OCI-LY7 (cell line): ENCODE measurements at regions of chr2 and their contacts with region 1.

Region 1: GRCh38 chr2:43131024-43131889 is 95.1 kb downstream of the ZFP36L2 start:
- DNase-seq: peak; percentile 93
- H3K4me3 ChIP-seq: peak overlapping the region; percentile 3
- H3K27ac ChIP-seq: peak overlapping the region; percentile 93
- H3K4me1 ChIP-seq: peaks cover 97% of the 10 kb centered on the region
- CTCF ChIP-seq: peak; percentile 70

Region 2: DNA sequence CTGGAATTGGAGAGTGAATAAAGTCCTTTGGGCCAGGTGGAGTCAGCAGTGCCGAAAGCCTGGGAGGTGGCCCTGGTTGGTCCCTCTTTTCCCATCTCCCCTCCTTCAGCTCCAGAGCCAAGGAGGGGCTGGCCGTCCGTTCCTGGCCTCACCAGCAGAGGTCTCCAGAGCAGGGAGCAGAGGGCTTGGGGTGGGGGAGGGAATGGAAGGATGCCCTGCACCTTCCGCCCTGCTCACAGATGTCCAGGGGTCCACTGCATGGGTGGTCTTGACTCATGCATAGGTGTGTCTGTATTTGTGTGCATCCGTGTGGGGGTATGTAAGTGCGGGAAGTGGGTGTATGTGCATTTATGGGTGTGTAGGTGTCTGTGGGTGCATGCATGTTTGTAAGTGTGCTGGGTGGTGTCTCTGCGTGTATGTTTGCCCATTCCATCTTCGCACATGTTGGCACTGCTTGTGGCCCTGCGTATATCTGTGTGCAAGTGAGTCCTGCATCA is 106.7 kb before region 1 on chr2:
- CTCF ChIA-PET with region 1: interaction called, 3 read pairs
- POLR2A ChIA-PET with region 1: no interaction called
- intact Hi-C with region 1: loop called (anchors 2 kb)
- DNase-seq: peak; percentile 55
- H3K4me3 ChIP-seq: no peak overlapping the region
- H3K27ac ChIP-seq: no peak overlapping the region
- H3K4me1 ChIP-seq: no peaks in the 10 kb centered on the region
- CTCF ChIP-seq: peak; percentile 88

Region 3: DNA sequence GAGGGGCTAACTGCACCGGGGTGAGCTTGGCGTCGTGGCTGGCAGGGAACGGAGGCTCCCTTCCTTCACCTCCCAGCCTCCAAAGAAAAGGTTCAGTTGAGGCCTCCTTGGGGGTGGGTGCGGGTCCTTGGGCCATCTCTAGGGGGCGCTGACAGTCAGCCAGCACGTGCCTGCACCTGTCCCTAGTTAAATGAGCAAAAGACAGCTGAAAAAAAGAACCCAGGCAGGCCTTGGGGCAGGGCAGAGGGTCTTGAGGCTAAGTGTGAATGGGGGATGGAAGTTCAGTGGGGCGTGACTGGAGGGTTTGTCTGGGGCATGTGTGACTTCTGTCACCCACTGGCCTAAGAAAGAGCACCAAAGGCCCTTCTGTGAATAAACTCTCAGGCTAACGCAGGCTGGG is 38.7 kb after region 1 on chr2:
- CTCF ChIA-PET with region 1: interaction called, 4 read pairs
- POLR2A ChIA-PET with region 1: interaction called, 8 read pairs
- intact Hi-C with region 1: loop called (anchors 1 kb)
- DNase-seq: peak; percentile 80
- H3K4me3 ChIP-seq: no peak overlapping the region
- H3K27ac ChIP-seq: no peak overlapping the region
- H3K4me1 ChIP-seq: peaks cover 51% of the 10 kb centered on the region
- CTCF ChIP-seq: peak; percentile 94

Region 4: GRCh38 chr2:43194121-43194869 is 63.0 kb after region 1 on chr2:
- CTCF ChIA-PET with region 1: interaction called, 3 read pairs
- POLR2A ChIA-PET with region 1: interaction called, 3 read pairs
- intact Hi-C with region 1: loop called (anchors 2 kb)
- DNase-seq: no peak
- H3K4me3 ChIP-seq: peak overlapping the region; percentile 33
- H3K27ac ChIP-seq: peak overlapping the region; percentile 71
- H3K4me1 ChIP-seq: peaks cover 48% of the 10 kb centered on the region
- CTCF ChIP-seq: no peak

Region 5: GRCh38 chr2:43219383-43220228 is 88.3 kb after region 1 on chr2:
- CTCF ChIA-PET with region 1: interaction called, 9 read pairs
- POLR2A ChIA-PET with region 1: interaction called, 16 read pairs
- intact Hi-C with region 1: no loop called
- DNase-seq: peak; percentile 94
- H3K4me3 ChIP-seq: peak overlapping the region; percentile 89
- H3K27ac ChIP-seq: peak overlapping the region; percentile 91
- H3K4me1 ChIP-seq: peaks cover 67% of the 10 kb centered on the region
- CTCF ChIP-seq: no peak; the same call in 1 of the 2 replicates

Region 6: DNA sequence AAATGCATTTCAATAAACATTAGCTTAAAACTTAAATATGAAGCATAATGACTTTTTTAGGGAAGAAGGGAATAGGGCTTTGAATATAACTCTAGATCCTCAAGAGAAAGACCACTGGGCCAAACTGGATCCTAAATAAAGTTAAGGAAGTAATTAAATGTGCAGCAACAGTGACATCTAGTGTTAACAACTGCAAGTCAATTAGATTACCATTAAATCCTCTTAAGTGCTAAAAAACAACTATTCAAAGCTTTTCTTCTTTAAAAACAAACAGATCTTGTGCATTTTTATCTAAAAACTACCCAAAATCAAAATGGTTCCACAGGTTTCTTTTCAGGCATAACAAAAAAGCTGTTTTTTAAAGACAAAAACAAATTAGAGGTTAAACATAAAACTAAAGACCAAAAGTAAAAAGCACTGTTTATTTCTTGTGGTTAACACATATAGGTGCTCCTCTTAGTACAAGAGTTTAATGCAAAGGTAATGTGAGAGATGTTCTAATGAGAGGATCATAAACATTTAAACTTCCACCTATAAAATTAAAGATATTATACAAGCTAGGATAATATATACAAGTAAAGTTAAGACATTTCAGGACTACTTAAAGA is 353.2 kb after region 1 on chr2:
- CTCF ChIA-PET with region 1: interaction called, 3 read pairs
- POLR2A ChIA-PET with region 1: interaction called, 6 read pairs
- intact Hi-C with region 1: loop called (anchors 1 kb)
- DNase-seq: peak; percentile 83
- H3K4me3 ChIP-seq: no peak overlapping the region
- H3K27ac ChIP-seq: no peak overlapping the region
- H3K4me1 ChIP-seq: no peaks in the 10 kb centered on the region
- CTCF ChIP-seq: peak; percentile 95